Right ventricle myocardium inferior (tissue), 1 donor: ENCODE measurements at regions of chr7 and their contacts with region 1.

Region 1: DNA sequence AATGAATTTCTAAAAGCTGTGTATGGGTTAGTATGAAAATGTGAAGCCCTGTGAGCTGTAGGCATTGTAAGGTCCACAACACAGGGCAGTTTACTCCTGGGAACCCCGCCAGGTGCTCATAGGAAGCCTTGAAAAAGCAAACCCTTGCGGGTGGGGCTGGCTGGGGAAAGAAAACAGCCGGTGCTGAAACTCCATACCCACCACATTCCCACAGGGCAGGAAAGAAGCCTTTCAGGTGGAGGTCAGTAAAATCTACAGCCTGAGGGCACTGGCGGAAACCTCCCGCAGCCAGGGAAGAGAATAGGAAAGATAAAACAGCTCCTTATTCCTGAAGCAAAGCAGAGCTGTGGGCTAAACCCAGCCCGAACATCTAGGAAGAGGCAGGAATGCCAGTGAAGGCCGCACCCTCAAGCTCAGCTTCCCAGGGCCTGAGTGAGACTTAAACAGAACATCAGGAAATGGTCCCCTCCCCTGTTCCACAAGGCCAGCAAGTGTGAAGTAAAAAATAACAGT is 34.7 kb downstream of the PODXL start:
- DNase-seq: peak; percentile 28
- ATAC-seq: peak; percentile 39

Region 2: GRCh38 chr7:131540441-131541162 is 18.9 kb after region 1 on chr7:
- intact Hi-C with region 1: loop called (anchors 2 kb)
- DNase-seq: peak; percentile 58
- ATAC-seq: no peak